Dorsolateral prefrontal cortex (tissue), 120 donors: ENCODE measurements at regions of chr16 and their contacts with region 1.

Region 1: DNA sequence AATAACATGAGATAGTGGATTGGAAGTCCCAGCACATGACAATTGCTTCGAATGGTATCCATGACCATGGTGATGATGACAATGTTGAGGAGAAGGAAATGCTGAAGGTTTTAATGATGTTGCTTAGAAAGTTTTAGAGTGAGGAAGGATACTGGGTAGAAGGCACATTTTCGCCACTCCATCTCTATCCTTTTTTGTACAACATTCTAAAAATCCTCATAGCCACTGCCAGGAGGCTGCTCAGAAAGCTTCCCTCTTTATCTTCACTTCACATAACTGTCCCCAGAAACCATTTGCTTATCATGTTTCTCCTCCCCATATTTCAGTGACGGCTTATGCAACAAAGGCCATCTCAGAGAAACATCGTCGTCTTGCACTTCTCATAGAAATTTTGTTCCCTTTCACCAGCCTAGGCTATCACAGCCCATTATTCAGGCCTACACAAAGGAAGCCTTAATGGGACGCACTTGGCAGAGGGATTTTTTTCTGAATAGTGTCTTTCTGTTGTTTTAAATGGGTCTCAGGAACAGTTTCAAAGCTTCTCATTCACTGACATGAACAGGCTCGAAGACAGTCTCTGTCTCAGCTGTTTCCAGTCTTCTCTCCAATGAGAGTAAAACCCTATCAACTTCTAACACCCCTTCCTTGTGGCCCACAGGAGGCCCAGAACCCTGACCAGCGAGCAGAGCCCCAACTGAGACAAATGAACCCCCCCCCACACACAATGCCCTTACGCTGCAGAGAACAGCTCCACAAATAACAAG is 506.7 kb downstream of the HAPSTR1 start:
- DNase-seq: peak in 2 of 10 donors; percentile 38 to 58
- H3K4me3 ChIP-seq: no peak overlapping the region
- H3K27ac ChIP-seq: peak overlapping the region in 46 of 59 donors; percentile 2 to 83 (median 61)
- H3K27me3 ChIP-seq: peaks cover 0 to 12% (median 0%) of the 10 kb centered on the region in 45 donors
- CTCF ChIP-seq: peak in 10 of 56 donors; percentile 13 to 39 (median 24)

Region 2: GRCh38 chr16:9176547-9177418 is 421.4 kb before region 1 on chr16:
- intact Hi-C with region 1: loop called in 1 of 2 experiments (anchors 10 kb)
- DNase-seq: peak; percentile 5 to 87 (median 76)
- H3K4me3 ChIP-seq: peak overlapping the region in 2 of 59 donors; percentile 10 to 16
- H3K27ac ChIP-seq: peak overlapping the region in 55 of 59 donors; percentile 3 to 92 (median 79)
- H3K27me3 ChIP-seq: no peaks in the 10 kb centered on the region
- CTCF ChIP-seq: peak in 10 of 56 donors; percentile 11 to 33 (median 24)

Region 3: DNA sequence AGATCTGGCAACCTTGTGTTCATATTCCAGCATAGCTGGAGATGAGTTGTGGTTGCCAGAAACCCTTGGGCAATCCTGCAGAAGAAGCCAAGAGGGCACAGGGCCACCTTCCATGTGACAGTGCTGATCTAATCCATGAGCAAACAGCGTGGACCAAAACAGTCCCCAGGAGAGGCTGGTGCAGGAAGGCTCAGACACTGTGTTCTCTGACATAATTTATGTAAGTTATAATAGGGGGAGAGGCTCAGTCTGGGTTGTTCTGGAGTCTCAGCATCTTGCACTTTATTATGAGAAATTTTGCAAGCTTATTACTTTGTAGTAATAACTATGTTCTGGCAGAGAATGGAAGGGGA is 232.8 kb before region 1 on chr16:
- intact Hi-C with region 1: loop called in 1 of 2 experiments (anchors 5 kb)
- DNase-seq: peak; percentile 67 to 95 (median 88)
- H3K4me3 ChIP-seq: peak overlapping the region in 22 of 59 donors; percentile 1 to 44 (median 24)
- H3K27ac ChIP-seq: peak overlapping the region in 58 of 59 donors; percentile 48 to 98 (median 85)
- H3K27me3 ChIP-seq: no peaks in the 10 kb centered on the region
- CTCF ChIP-seq: peak in 8 of 56 donors; percentile 8 to 35 (median 16)

Region 4: DNA sequence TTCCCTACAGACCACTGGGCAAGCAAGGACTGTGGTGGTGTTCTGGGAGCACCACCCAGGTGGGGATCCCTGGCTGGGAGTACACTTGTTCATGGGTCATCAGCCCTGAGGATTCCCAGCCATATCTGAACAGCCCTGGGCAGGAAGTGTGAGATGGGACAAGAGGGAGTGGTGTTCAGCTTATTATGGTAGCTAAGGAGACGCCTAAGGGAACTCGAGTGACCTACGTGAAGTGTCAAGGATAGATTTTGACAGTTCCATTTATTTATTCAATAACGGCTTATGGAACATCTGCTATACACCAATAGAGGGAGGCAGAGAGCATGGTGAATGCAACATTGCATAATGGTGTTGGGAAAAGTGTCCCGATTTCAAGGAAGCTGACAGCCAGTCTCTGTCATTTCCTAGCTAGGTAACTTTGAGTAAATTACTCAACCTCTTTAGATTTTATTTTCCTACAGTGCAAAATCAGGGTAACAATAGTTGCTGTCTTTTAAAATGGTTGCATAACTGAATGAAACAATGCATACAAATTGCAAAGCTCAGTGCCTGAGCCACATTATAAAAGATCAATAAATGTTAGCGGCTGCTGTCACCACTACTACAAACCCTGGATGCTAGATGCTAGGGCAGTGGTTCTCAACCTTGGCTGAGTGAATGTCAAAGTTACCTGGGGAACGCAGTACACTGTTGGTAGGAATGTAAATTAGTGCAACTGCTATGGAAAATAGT is 50.0 kb after region 1 on chr16:
- intact Hi-C with region 1: loop called in 1 of 2 experiments (anchors 5 kb)
- DNase-seq: peak in 2 of 10 donors; percentile 12 to 29
- H3K4me3 ChIP-seq: no peak overlapping the region
- H3K27ac ChIP-seq: no peak overlapping the region
- H3K27me3 ChIP-seq: no peaks in the 10 kb centered on the region
- CTCF ChIP-seq: peak; percentile 46 to 78 (median 70)

Region 5: GRCh38 chr16:9772526-9773225 is 174.5 kb after region 1 on chr16:
- intact Hi-C with region 1: no loop called
- DNase-seq: no peak
- H3K4me3 ChIP-seq: no peak overlapping the region
- H3K27ac ChIP-seq: peak overlapping the region in 10 of 59 donors; percentile 1 to 46 (median 21)
- H3K27me3 ChIP-seq: no peaks in the 10 kb centered on the region
- CTCF ChIP-seq: no peak